Activated CD4-positive, alpha-beta memory T cell treated with anti-CD3 and anti-CD28 coated beads, Interleukin-2, amount 10 ng/mL, durations not matched to agents 7 days and 5 days (primary cell): ENCODE measurements at regions of chr7 and their contacts with region 1.

Region 1: DNA sequence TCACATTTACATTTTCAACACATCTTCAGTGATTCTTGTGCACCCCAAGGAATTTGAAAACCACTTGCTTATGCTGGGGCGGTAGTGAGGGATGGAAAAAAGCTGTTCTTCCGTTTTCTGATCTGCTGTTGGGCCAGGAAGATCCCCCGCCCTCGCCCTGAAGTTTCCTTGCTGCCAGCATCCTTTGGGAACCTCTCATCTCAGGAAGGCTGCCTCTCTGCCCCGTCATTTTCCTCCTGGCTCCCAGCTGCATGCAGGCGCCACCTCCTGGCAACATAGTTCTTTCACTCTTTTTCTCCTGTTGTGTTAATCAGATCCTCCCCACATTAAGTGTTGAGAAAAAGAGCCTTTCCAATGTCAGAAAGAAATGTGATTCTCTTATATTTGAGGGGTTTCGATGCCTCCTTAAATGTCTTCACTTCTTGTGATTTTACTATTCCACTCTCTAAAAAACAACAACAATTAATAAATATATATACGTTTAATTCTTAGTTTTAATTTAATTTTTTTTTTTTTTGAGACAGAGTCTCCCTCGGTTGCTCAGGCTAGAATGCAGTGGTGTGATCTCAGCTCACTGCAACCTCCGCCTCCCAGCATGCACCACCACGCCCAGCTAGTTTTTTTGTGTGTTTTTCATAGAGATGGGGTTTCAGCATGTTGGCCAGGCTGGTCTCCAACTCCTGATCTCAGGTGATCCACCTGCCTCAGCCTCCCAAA is 122.9 kb downstream of the RALA start:
- DNase-seq: peak; percentile 55
- H3K4me3 Mint-ChIP-seq: no peak overlapping the region
- H3K27ac Mint-ChIP-seq: no peak overlapping the region
- H3K4me1 Mint-ChIP-seq: peaks cover 4% of the 10 kb centered on the region
- H3K27me3 Mint-ChIP-seq: no peaks in the 10 kb centered on the region

Region 2: GRCh38 chr7:39732837-39733804 is 13.1 kb before region 1 on chr7:
- CTCF ChIA-PET with region 1: interaction called, 22 read pairs
- POLR2A ChIA-PET with region 1: interaction called, 3 read pairs
- DNase-seq: peak; percentile 91
- H3K4me3 Mint-ChIP-seq: peak overlapping the region; percentile 90
- H3K27ac Mint-ChIP-seq: peak overlapping the region; percentile 83
- H3K4me1 Mint-ChIP-seq: peaks cover 42% of the 10 kb centered on the region
- H3K27me3 Mint-ChIP-seq: no peaks in the 10 kb centered on the region